HAP-1 (cell line): ENCODE measurements at regions of chr12 and their contacts with region 1.

Region 1: DNA sequence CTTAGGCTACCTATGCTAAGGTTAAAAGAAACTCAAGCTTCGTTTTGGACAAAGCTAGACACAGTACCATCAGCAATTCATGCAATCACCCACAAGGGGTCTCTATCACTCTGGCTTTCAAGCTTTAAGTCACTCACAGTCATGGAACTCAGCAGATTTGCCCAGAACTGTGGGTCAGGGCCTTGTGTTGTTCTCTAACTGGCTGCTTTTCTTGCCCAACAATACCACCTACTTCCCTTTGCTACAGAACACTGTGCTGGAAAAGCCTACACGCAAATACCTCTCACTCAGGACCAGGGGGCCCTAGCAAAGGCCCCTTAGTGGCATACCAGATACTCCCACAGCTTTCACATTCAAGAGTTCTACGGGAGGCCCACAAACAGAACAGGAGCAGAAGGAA is 9.1 kb downstream of the NEMP1 start:
- DNase-seq: peak; percentile 52 to 68
- H3K4me3 ChIP-seq: no peak overlapping the region
- H3K4me1 ChIP-seq: no peaks in the 10 kb centered on the region
- H3K27me3 ChIP-seq: no peaks in the 10 kb centered on the region

Region 2: DNA sequence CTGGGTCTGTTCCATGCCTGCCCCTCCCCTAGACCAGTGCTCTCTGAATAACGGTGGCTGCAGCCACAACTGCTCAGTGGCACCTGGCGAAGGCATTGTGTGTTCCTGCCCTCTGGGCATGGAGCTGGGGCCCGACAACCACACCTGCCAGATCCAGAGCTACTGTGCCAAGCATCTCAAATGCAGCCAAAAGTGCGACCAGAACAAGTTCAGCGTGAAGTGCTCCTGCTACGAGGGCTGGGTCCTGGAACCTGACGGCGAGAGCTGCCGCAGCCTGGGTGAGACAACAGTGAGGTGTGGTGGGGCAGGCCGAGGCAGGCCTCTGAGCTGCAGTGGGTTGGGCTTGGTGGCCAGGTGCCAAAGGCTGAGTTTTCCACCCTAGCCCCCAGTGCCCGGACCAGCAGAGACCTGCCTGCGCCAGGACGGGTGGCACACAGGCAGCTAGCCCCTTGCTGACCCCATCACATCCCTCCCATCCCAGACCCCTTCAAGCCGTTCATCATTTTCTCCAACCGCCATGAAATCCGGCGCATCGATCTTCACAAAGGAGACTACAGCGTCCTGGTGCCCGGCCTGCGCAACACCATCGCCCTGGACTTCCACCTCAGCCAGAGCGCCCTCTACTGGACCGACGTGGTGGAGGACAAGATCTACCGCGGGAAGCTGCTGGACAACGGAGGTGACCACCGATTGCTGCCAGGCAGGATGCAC is 106.1 kb after region 1 on chr12:
- in situ Hi-C with region 1: loop called (anchors 5 kb)
- DNase-seq: peak; percentile 66 to 93
- H3K4me3 ChIP-seq: no peak overlapping the region
- H3K4me1 ChIP-seq: peaks cover 3% of the 10 kb centered on the region; the same call in 1 of the 2 replicates
- H3K27me3 ChIP-seq: no peaks in the 10 kb centered on the region

Region 3: GRCh38 chr12:57238854-57239554 is 169.5 kb after region 1 on chr12:
- in situ Hi-C with region 1: no loop called
- DNase-seq: peak; percentile 80 to 93
- H3K4me3 ChIP-seq: peak overlapping the region; percentile 54
- H3K4me1 ChIP-seq: peaks cover 22% of the 10 kb centered on the region
- H3K27me3 ChIP-seq: no peaks in the 10 kb centered on the region

Region 4: DNA sequence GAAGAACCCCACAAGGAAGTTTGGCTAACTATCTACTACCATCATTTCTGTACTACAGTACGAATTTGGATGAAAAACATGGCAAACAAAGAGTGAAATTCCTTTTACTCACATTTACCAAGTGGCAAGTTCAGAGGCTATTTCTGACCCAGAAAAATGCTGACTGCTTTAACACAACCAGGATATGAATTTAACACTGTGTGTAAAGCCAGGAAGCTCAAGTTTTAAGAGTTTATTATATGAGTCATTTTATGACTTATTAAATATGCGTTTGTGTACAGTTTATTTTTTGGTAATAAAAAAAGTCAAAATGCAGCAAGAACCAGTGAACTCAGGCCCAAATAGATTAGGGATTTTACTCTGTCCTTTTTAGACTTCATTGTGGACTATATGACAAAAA is 239.9 kb after region 1 on chr12:
- in situ Hi-C with region 1: no loop called
- DNase-seq: no peak
- H3K4me3 ChIP-seq: no peak overlapping the region
- H3K4me1 ChIP-seq: no peaks in the 10 kb centered on the region
- H3K27me3 ChIP-seq: no peaks in the 10 kb centered on the region